MCF 10A (cell line): ENCODE measurements at regions of chr1 and their contacts with region 1.

Region 1: DNA sequence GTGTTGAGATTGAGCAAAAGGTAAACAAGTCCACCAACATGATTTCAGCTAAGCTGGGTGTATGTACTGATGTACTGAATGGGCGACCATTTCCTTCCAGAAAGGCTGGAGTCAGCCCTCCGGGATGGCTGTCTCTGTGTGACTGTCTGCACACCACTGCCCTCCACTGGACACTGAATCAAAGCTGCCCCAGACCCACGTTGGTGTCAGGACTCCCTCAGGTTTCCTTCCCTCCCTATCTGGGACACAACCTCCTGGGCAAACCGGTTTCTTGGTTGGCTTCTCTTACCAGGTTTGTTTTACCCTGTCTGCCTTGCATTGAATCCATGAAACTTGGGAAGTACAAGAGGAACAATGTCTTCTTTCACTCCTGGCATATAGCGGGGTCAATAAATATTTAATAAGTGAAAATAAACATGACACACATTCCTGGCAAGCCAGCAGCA is 5.3 kb upstream of the SRP9 start:
- DNase-seq: peak; percentile 97
- H3K4me3 Mint-ChIP-seq: no peak overlapping the region
- H3K27ac Mint-ChIP-seq: no peak overlapping the region
- H3K4me1 Mint-ChIP-seq: peaks cover 19% of the 10 kb centered on the region
- H3K27me3 Mint-ChIP-seq: no peaks in the 10 kb centered on the region
- CTCF ChIP-seq: peak; percentile 100

Region 2: GRCh38 chr1:225480825-225481434 is 291.4 kb before region 1 on chr1:
- CTCF ChIA-PET with region 1: interaction called, 712 read pairs
- POLR2A ChIA-PET with region 1: interaction called, 19 read pairs
- intact Hi-C with region 1: loop called (anchors 1 kb)
- DNase-seq: peak; percentile 85
- H3K4me3 Mint-ChIP-seq: no peak overlapping the region
- H3K27ac Mint-ChIP-seq: no peak overlapping the region
- H3K4me1 Mint-ChIP-seq: peaks cover 7% of the 10 kb centered on the region
- H3K27me3 Mint-ChIP-seq: peaks cover 15% of the 10 kb centered on the region
- CTCF ChIP-seq: peak; percentile 100

Region 3: GRCh38 chr1:225578251-225578950 is 193.9 kb before region 1 on chr1:
- CTCF ChIA-PET with region 1: interaction called, 14 read pairs
- POLR2A ChIA-PET with region 1: interaction called, 4 read pairs
- intact Hi-C with region 1: no loop called
- DNase-seq: no peak
- H3K4me3 Mint-ChIP-seq: no peak overlapping the region
- H3K27ac Mint-ChIP-seq: no peak overlapping the region
- H3K4me1 Mint-ChIP-seq: peaks cover 28% of the 10 kb centered on the region
- H3K27me3 Mint-ChIP-seq: no peaks in the 10 kb centered on the region
- CTCF ChIP-seq: no peak

Region 4: DNA sequence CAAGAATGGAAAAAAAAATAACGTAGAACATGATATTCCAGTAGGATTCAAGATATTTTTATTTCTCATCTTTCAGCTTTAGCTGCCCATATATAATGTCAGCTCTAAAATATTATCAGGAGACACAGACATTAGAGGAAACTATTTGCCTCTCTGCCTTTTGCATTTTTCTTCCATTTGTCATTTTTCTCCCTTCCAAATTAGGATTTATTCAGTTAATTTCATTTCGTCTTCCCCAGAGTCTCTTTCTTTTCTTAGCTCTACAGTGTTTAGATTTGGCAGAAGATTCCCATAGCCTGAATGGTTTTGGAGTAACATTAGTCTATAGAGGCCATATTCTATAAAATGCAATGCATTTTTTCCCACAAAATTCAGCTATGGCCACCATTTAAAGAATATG is 114.3 kb before region 1 on chr1:
- CTCF ChIA-PET with region 1: interaction called, 68 read pairs
- POLR2A ChIA-PET with region 1: interaction called, 188 read pairs
- intact Hi-C with region 1: loop called (anchors 1 kb)
- DNase-seq: no peak
- H3K4me3 Mint-ChIP-seq: no peak overlapping the region
- H3K27ac Mint-ChIP-seq: peak overlapping the region; percentile 71
- H3K4me1 Mint-ChIP-seq: peaks cover 40% of the 10 kb centered on the region
- H3K27me3 Mint-ChIP-seq: no peaks in the 10 kb centered on the region
- CTCF ChIP-seq: no peak

Region 5: GRCh38 chr1:225746361-225747179 is 25.8 kb before region 1 on chr1:
- CTCF ChIA-PET with region 1: interaction called, 50 read pairs
- POLR2A ChIA-PET with region 1: interaction called, 230 read pairs
- intact Hi-C with region 1: no loop called
- DNase-seq: peak; percentile 98
- H3K4me3 Mint-ChIP-seq: peak overlapping the region; percentile 66
- H3K27ac Mint-ChIP-seq: peak overlapping the region; percentile 90
- H3K4me1 Mint-ChIP-seq: peaks cover 35% of the 10 kb centered on the region
- H3K27me3 Mint-ChIP-seq: no peaks in the 10 kb centered on the region
- CTCF ChIP-seq: no peak

Region 6: DNA sequence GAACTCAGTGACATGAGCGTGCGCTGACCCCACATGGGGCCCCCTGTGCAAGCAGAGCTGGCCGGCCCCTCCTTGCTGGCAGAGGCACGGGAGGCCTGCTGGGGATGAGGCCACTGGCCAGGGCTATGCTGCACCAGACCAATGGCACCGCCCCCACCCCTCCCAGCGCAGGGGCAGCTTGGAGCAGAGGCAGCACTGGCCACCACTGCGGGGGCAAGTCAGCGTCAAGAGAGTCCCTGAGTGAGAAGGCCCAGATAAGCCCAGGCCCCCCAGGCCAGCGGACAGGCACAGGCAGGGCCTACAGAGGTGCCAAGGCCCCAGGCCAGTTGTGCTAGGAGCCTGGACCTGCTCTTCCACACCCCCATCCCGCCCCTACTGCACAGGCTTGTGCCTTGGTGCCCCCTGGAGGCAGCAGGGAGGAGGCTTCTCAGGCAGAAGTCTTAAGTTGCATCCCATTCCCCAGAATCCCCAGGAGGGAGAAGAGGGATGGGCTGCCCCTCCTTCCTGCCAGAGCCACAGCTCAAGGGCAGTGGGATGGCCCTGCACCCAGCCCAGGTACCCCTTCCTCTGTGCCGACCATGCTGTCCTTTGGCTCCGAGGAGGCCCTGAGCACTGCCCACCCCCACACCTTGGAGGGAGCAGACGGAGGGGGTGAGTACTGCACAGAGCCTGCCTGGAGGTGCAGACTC is 73.4 kb after region 1 on chr1:
- CTCF ChIA-PET with region 1: interaction called, 32 read pairs
- POLR2A ChIA-PET with region 1: interaction called, 22 read pairs
- intact Hi-C with region 1: loop called (anchors 1 kb)
- DNase-seq: peak; percentile 95
- H3K4me3 Mint-ChIP-seq: no peak overlapping the region
- H3K27ac Mint-ChIP-seq: no peak overlapping the region
- H3K4me1 Mint-ChIP-seq: no peaks in the 10 kb centered on the region
- H3K27me3 Mint-ChIP-seq: no peaks in the 10 kb centered on the region
- CTCF ChIP-seq: peak; percentile 97

Region 7: DNA sequence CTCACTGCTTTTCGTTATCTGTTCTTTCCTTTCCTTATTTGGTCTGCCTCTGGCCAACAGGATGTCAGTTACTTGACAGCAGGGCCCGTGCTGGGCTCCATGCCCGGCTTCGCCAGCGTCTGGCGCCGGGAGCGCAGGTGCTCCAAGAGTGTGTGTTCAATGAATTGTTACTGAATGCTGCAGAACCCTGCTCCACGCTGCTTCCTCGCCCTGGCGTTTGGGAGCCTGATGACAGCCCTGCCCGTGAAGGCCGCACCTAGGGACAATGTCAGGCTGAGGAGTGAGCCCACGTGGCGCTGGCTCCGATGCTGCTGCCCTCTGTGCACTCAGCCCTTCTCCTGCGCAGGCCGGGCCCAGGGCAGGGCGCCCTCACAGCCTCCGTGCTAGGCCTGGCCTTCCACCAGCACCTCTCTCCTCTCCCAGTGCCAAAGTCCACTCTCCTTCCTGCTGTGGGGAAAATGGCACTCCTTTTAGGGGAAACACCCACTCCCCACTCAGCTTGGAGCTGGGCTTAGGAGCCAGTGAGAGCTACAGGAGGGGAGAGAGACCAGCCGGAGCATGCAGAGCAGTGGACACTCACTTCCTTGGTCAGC is 362.8 kb after region 1 on chr1:
- CTCF ChIA-PET with region 1: no interaction called
- POLR2A ChIA-PET with region 1: no interaction called
- intact Hi-C with region 1: no loop called
- DNase-seq: no peak
- H3K4me3 Mint-ChIP-seq: no peak overlapping the region
- H3K27ac Mint-ChIP-seq: peak overlapping the region; percentile 5
- H3K4me1 Mint-ChIP-seq: peaks cover 11% of the 10 kb centered on the region
- H3K27me3 Mint-ChIP-seq: no peaks in the 10 kb centered on the region
- CTCF ChIP-seq: no peak